ENCODE measurements at regions of chr14 and their contacts with region 1.

Region 1: DNA sequence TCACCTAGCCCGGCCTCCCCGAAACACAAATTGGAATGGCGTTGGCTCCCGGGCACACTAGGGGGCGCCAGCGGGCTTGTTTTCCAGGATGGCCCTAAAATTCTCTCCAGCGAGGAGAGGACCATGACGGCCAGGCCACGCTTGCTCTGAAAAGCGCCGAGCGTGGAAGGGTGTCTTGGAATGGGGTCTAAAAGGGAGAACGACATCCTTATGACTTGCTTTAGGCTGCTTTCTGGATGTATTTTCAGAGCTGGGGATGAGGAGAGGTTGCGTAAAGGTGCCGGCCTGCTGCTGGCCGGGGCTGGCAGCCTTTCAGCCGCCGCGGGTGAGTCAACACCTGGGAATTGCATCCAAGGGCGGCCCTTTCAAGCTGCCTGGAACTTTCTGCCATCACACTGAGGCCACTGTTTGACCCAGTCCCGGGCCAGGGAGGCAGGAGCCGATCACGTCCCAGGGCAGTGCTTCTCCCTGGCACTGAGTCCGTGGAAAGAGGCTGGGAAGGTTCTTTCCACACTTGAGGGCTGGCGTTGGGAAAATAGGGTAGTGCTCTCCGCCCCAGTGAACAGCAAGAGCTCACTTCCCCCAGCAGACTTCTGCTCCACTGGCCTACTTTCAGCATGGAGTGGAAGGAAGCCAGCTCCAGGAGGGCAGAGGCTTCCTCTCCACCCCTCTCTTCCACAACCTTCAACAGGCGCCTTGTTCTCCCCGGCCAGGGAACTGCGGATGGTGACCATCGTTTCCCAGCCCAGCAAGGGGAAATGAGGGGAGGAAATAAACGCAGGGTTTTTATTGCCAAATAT is 216.2 kb downstream of the TTC8 start:
- DNase-seq: peak; percentile 80 to 97 (median 92)

Region 2: DNA sequence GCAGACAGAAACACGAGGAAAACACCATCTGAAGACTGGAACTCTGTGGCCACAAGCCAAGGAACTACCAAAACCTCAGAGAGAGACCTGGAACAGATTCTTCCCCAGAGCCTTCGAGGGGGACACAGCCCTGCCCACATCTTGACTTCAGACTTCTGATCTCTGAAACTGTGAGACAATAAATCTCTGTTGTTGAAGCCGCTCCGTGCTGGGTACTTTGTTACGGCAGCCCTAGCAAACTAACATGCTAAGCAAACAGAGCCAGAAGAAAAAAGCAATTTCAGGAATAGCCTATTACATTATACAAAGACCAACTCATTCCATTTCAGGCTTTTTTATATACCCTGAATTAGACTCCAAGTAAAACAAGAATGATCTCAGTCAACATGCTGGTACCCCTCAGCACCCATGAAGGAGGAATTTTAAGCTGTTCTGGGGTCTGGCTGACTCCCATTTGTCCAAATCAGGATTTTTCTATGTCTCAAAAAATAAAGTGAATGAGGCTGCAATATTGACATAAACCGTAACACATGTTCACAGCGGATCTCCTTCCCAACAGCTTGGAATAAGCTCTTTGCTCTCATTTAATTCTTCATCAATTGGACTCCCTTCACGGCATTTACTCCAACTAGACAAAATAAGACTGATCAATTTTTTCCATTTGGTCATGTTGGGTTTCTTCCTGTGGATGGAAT is 186.3 kb after region 1 on chr14:
- intact Hi-C with region 1: no loop called
- DNase-seq: no peak

Region 3: GRCh38 chr14:89416002-89416995 is 375.6 kb after region 1 on chr14:
- intact Hi-C with region 1: loop called (anchors 5 kb)
- DNase-seq: peak; percentile 96 to 100 (median 98)

Region 4: DNA sequence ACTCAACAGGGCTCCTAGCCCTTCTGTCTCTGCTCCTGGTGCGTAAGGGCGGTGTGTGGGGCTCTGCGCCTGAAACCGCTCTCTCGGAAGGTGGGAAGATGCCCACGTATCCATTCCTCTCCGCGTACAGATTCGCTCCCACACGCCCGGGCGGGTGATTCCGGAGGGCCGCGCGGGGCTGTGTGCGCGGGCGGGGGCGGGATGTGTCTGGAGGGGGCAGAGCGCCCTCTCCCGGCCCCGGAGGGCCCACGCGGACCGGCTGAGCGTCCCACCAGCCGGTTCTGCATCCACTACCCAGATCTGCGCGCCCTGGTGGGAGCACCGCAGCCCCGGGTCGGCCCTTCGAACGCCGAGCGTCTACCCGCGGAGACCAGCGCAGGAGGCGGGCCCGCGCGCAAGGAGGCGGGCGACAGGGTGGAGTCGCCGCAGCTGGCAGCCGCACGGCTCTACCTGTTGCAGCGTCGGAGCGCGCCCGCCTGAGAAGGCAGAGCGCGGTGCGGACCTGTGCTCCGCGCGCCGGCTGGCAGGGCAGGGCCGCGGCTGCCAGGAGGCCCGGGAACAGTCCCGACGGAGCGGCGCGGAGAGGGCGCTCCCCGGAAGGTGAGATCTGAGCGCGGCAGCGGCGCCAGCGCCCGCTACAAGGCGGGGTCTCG is 1019.8 kb after region 1 on chr14:
- intact Hi-C with region 1: loop called (anchors 5 kb)
- DNase-seq: peak; percentile 27 to 95 (median 64)

Region 5: GRCh38 chr14:90235179-90235976 is 1194.7 kb after region 1 on chr14:
- intact Hi-C with region 1: loop called (anchors 10 kb)
- DNase-seq: peak; percentile 15 to 92 (median 66)

Measured in posterior cingulate gyrus (tissue), 11 donors.